Right cardiac atrium (tissue), 5 donors: ENCODE measurements at regions of chr2 and their contacts with region 1.

Region 1: GRCh38 chr2:144504218-144504641 is 15.7 kb downstream of the ZEB2 start:
- DNase-seq: no peak
- ATAC-seq: peak; percentile 34 to 38
- H3K4me3 ChIP-seq: peak overlapping the region; percentile 28
- H3K27ac ChIP-seq: peak overlapping the region; percentile 97
- H3K4me1 ChIP-seq: peaks cover 11% of the 10 kb centered on the region
- H3K27me3 ChIP-seq: no peaks in the 10 kb centered on the region

Region 2: DNA sequence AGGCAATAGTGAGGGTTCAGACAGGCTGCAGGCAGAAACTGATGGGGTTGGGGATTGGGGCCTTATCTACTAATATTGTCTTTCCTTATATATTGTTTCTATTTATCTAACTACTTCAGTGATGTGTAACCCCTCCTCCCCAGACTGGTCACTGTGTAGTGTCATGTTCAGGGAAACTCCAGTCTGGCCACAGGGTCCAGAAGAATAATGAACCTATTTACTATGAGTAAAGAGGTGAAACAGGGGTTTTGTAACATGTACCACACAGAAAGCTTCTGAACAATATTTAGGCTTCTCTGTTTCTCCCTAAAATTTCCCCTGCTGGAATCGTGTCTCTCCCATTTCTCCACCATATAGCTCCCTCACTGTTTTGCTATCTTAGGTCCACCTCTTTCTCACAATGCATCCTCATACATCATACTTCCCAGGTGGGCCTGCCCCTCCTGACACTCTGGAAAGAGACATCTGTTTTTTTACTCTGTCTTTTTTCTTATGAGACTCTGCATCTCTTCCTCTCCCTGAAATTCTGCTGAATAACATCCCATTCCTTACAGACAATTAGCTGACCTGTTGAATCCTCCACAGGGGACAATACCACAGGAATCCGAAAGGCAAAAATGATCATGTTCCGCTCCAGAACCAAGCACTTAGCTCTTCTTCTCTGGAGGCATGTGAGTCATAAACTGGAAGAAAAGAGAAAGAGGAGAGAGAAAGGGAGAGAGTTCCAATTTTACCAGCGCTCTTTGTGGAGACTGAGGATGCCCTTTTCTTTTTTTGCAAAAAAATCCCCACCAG is 139.1 kb before region 1 on chr2:
- intact Hi-C with region 1: no loop called
- DNase-seq: no peak
- ATAC-seq: no peak
- H3K4me3 ChIP-seq: no peak overlapping the region
- H3K27ac ChIP-seq: no peak overlapping the region
- H3K4me1 ChIP-seq: no peaks in the 10 kb centered on the region
- H3K27me3 ChIP-seq: no peaks in the 10 kb centered on the region

Region 3: DNA sequence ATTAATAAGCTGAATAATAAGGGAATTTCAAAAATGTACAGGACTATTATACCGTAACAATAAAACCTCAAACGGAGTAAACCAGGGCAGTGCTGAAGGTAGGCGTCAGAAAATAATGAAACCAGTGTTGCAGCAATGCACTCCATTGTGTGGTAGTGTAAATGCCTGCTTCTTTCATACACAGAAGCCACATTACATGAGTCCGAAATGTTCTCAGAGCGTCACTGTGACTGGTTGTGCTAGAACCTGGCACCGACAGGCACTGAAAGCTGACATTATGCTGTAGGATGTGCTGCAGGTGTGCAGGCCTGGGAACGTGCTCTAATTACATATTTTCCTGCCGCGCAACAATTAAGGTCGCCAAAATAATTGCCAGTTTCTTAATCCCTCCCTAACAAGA is 37.6 kb before region 1 on chr2:
- intact Hi-C with region 1: loop called in 1 of 4 experiments (anchors 5 kb)
- DNase-seq: no peak
- ATAC-seq: no peak
- H3K4me3 ChIP-seq: no peak overlapping the region
- H3K27ac ChIP-seq: no peak overlapping the region
- H3K4me1 ChIP-seq: peaks cover 8% of the 10 kb centered on the region
- H3K27me3 ChIP-seq: no peaks in the 10 kb centered on the region

Region 4: DNA sequence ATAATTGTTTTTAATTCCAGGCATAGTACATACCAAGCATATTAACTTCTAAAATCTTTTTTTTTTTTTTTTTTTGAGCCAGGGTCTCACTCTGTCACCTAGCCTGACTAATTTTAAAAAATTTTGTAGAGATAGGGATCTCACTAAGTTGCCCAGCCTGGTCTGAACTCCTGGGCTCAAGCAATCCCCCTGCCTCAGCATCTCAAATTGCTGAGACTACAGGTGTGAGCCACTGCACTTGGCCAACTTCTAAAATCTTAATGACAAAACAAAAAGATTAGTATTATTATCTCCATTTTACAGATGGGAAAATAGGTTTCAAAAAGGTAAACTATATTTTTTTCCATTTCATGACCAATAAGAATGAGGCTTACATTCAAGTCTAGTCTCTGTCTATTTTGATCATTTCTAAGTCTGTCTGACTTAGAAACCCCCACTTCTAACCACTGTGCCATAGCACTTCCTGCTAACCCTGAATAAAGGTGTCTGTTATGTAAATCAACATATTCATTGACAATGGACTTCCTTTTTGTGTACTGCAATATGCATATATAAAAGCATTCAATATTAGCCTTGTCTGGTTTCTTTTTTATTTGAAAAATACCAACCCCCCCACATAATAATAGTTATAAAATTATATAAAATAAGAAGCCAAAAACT is 44.4 kb after region 1 on chr2:
- intact Hi-C with region 1: no loop called
- DNase-seq: no peak
- ATAC-seq: no peak
- H3K4me3 ChIP-seq: no peak overlapping the region
- H3K27ac ChIP-seq: no peak overlapping the region
- H3K4me1 ChIP-seq: no peaks in the 10 kb centered on the region
- H3K27me3 ChIP-seq: no peaks in the 10 kb centered on the region